ENCODE measurements at regions of chr11 and their contacts with region 1.

Region 1: DNA sequence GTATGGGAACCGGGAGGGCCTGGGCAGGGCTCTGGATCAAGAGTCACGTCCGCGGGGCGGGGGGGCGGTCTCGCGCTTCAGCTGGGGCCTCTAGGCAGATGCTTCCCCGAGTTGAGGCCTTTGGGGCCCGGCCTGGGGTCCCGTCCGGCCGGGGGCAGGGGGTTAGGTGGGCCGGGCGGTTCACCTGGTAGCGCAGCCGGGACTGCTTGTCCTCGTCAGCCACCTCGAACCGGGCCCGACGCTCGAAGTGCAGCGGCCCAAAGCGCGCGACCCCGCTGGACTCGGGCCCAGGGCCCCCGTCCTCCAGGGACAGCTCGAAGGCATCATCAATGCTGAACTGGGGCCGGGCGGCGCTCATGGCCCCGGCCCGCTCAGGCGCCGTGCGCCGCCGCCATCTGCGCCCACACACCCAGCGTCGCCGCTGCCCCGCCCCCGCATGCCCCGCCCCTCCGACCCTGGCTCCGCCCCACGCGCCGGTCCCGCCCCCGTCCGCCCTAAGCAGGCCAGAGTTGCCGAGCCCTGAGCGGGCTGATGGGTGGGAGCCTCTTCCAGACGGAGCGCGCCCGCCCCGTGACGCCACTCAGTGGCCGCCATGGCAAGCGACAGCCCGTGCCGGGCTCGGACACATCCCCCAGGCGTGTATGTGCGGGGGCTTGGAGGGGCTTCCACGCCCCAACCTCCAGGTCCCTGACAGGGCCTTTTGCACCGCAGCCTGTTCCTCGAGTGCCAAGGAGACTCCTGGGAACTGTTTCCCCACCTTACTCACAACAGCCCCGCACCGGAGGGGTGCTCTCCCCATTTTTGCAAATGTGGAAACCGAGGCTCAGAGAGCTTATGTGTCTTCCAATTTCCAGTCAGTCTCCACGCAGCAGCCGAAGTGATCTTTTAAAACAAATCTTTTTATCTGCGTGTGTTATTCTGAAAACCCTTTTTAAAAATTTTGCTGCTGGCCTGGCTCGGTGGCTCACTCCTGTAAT is at the start of gene TMEM134:
- DNase-seq: peak; percentile 89 to 91
- ATAC-seq: peak; percentile 84 to 89
- H3K4me3 ChIP-seq: peak within 1 kb of the TSS; percentile 86 to 98 (median 94)
- H3K27ac ChIP-seq: peak within 1 kb of the TSS; percentile 79 to 96 (median 88)
- H3K4me1 ChIP-seq: peaks cover 10 to 22% of the 10 kb centered on the region in 2 donors
- H3K27me3 ChIP-seq: no peaks in the 10 kb centered on the region
- CTCF ChIP-seq: peak; percentile 24 to 62 (median 57)
- POLR2A ChIP-seq: peak; percentile 54 to 64
- total RNA-seq, gene TMEM134: 79.8 to 155 (median 108) TPM

Region 2: GRCh38 chr11:67391304-67392132 is 77.6 kb before region 1 on chr11 and contains the start of gene RAD9A:
- in situ Hi-C with region 1: loop called in 2 of 4 experiments (anchors 10 kb)
- intact Hi-C with region 1: no loop called
- DNase-seq: peak; percentile 92 to 94
- ATAC-seq: peak; percentile 90 to 92
- H3K4me3 ChIP-seq: peak within 1 kb of the TSS; percentile 59 to 83 (median 74)
- H3K27ac ChIP-seq: peak within 1 kb of the TSS; percentile 79 to 89 (median 86)
- H3K4me1 ChIP-seq: peaks cover 5 to 15% of the 10 kb centered on the region in 2 donors
- H3K27me3 ChIP-seq: no peaks in the 10 kb centered on the region
- CTCF ChIP-seq: peak in 2 of 5 experiments; percentile 64 to 73
- POLR2A ChIP-seq: peak; percentile 34 to 66
- total RNA-seq, gene RAD9A: 5.2 to 14.7 (median 7.7) TPM

Region 3: GRCh38 chr11:67401495-67402191 is 67.5 kb before region 1 on chr11 and contains the start of gene PPP1CA:
- in situ Hi-C with region 1: loop called in 2 of 4 experiments (anchors 10 kb)
- intact Hi-C with region 1: loop called (anchors 1 kb)
- DNase-seq: peak; percentile 81 to 87
- ATAC-seq: peak; percentile 90 to 92
- H3K4me3 ChIP-seq: peak within 1 kb of the TSS; percentile 70 to 97 (median 80)
- H3K27ac ChIP-seq: peak within 1 kb of the TSS; percentile 87 to 96 (median 90)
- H3K4me1 ChIP-seq: peaks cover 20 to 22% of the 10 kb centered on the region in 2 donors
- H3K27me3 ChIP-seq: no peaks in the 10 kb centered on the region
- CTCF ChIP-seq: peak; percentile 33 to 93 (median 55)
- POLR2A ChIP-seq: peak; percentile 75 to 83
- total RNA-seq, gene PPP1CA: 78.4 to 193 (median 124) TPM

Region 4: GRCh38 chr11:67428052-67428914 is 40.8 kb before region 1 on chr11 and contains the start of gene RPS6KB2:
- in situ Hi-C with region 1: no loop called
- intact Hi-C with region 1: loop called (anchors 5 kb)
- DNase-seq: peak; percentile 96 to 99
- ATAC-seq: peak; percentile 96 to 99
- H3K4me3 ChIP-seq: peak within 1 kb of the TSS; percentile 92 to 100 (median 95)
- H3K27ac ChIP-seq: peak within 1 kb of the TSS; percentile 94 to 98 (median 96)
- H3K4me1 ChIP-seq: peaks cover 16 to 32% of the 10 kb centered on the region in 2 donors
- H3K27me3 ChIP-seq: no peaks in the 10 kb centered on the region
- CTCF ChIP-seq: no peak
- POLR2A ChIP-seq: peak; percentile 95 to 98
- total RNA-seq, gene RPS6KB2: 38.0 to 74.1 (median 39.4) TPM

Region 5: GRCh38 chr11:67442504-67443405 is 26.4 kb before region 1 on chr11:
- in situ Hi-C with region 1: no loop called
- intact Hi-C with region 1: loop called (anchors 2 kb)
- DNase-seq: no peak
- ATAC-seq: peak; percentile 22 to 25
- H3K4me3 ChIP-seq: peak overlapping the region; percentile 66 to 85 (median 71)
- H3K27ac ChIP-seq: peak overlapping the region; percentile 78 to 93 (median 89)
- H3K4me1 ChIP-seq: peaks cover 4 to 13% of the 10 kb centered on the region in 2 donors
- H3K27me3 ChIP-seq: no peaks in the 10 kb centered on the region
- CTCF ChIP-seq: no peak
- POLR2A ChIP-seq: no peak